ENCODE measurements at regions of chr10 and their contacts with region 1.

Region 1: GRCh38 chr10:4849555-4850242 is 23.7 kb downstream of the AKR1E2 start:
- DNase-seq: peak; percentile 91
- ATAC-seq: peak; percentile 93
- H3K4me3 Mint-ChIP-seq: no peak overlapping the region
- H3K27ac Mint-ChIP-seq: no peak overlapping the region
- H3K4me1 Mint-ChIP-seq: peaks cover 6% of the 10 kb centered on the region
- H3K27me3 Mint-ChIP-seq: no peaks in the 10 kb centered on the region

Region 2: DNA sequence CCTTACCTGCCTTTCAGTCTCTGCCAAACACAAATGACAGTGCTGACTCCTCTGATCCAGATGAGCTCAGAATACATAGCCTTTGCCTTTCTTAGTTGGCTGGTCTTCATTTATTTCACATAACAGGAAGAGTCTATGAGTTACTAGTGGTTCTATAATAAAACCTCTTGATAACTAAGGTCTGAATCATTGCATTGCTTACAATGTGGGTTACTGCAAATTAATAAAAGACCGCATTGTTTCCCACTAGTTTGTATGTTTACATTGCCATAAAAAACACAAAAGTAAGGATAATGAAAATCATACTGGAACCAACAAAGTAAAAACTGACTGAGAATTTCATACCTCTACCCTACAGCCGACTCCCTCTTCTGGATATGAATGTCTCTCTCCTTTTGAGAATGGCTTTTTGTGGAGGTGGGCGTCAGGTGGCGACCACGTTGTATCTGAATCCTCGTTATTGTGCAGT is 85.7 kb before region 1 on chr10:
- CTCF ChIA-PET with region 1: no interaction called
- POLR2A ChIA-PET with region 1: no interaction called
- DNase-seq: no peak
- ATAC-seq: no peak
- H3K4me3 Mint-ChIP-seq: no peak overlapping the region
- H3K27ac Mint-ChIP-seq: no peak overlapping the region
- H3K4me1 Mint-ChIP-seq: no peaks in the 10 kb centered on the region
- H3K27me3 Mint-ChIP-seq: peaks cover 12% of the 10 kb centered on the region

Region 3: DNA sequence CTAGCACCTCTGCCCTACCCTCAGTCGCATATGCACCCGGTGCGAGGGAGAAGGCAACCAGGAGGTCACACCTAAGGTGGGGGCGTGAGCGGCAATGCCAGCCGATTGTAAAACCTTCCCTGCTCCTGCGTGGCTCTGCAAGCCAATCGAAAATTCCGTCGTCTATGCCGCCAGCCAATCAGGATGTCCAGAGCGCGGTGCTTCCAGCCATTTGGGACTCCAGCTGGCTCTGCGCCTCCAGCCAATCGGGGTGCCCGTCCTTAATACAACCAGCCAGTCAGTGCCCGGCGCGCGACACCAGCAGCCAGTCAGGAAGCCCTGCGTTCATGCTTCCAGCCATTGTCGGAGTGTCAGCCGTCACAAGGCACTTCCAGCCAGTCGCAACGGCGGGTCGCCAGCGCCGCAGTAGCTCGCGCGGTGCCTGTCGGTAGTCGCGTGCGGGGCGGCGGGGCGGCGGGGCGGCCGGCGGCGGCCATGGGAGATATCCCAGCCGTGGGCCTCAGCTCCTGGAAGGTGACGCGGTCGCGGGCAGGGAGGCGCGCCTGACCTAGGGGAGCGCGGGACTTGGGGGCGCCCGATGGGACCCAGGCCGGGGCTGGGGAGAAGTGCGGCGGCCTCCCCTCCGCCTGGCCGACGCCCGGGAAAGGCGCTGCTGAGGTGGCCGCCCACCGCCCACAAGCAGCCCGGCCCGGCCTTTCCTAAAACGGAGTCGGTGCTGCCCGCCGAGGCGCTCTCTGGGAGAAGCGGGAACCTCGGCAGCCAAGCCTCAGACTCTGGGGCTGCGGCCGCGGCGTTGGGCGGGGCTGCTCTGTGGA is 23.6 kb before region 1 on chr10 and contains the start of gene AKR1E2:
- CTCF ChIA-PET with region 1: interaction called, 10 read pairs
- POLR2A ChIA-PET with region 1: no interaction called
- DNase-seq: peak; percentile 88
- ATAC-seq: peak; percentile 97
- H3K4me3 Mint-ChIP-seq: peak within 1 kb of the TSS; percentile 77
- H3K27ac Mint-ChIP-seq: peak within 1 kb of the TSS; percentile 67
- H3K4me1 Mint-ChIP-seq: peaks cover 17% of the 10 kb centered on the region
- H3K27me3 Mint-ChIP-seq: peaks cover 39% of the 10 kb centered on the region
- total RNA-seq, gene AKR1E2: 6.5 to 8.9 TPM

Region 4: DNA sequence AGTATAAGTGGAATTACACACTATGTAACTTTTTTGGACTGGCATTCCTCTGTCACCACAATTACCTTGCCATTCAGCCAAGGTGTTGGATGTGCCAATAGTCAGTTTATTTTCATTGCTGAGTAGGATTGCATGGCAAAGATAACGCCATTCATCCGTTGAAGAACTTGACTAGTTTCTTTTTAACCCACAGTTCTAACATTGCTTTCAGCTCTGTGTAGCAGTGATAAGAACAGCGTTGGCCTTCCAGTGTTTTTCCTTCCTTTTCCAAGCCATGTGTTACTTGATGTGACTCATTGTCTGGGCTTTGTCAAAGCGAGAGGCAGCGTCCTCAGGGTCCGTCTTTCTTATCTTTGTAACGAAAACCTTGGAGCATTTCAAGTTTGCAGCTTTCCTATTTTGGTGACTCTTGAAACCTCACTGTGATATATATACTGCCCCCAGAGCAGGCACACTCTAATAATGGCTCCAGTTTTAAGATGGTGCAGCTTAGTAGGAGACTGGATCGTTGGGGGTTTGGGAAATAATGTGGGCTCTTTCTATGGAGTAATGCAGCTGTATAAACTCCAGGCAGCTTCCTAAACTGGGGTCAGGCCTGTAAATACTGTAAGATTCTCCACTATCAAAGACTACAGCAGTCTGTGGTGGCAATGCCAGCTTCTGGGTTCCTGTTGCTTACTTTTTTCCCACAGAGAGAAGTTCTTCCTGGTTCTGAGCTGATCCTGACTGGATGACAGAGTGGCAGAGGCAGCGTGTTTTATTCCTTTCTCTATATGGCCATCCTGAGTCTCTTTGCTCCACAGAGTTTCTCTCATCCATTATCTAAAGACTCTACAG is 18.0 kb after region 1 on chr10:
- CTCF ChIA-PET with region 1: interaction called, 21 read pairs
- POLR2A ChIA-PET with region 1: no interaction called
- DNase-seq: no peak
- ATAC-seq: no peak
- H3K4me3 Mint-ChIP-seq: no peak overlapping the region
- H3K27ac Mint-ChIP-seq: no peak overlapping the region
- H3K4me1 Mint-ChIP-seq: no peaks in the 10 kb centered on the region
- H3K27me3 Mint-ChIP-seq: peaks cover 7% of the 10 kb centered on the region

Region 5: DNA sequence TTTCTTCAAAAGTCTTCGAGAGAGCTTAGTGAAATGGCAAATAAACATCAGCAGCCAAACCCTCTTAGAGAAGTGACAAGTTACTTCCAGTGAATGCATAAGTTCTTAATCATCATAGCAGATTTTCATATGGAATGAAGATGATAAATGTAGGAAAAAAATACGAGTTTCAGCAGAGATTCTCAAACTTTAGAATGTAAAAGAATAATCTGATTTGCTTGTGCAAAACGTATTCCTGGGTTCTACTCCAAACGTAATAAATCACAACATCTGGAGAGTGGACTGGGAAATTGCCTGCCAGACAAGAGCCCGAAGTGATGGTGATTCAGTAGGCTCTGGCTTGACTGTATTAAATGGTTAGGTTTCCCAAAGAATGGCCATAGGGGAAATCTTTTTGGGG is 38.5 kb after region 1 on chr10:
- CTCF ChIA-PET with region 1: no interaction called
- POLR2A ChIA-PET with region 1: no interaction called
- DNase-seq: no peak
- ATAC-seq: no peak
- H3K4me3 Mint-ChIP-seq: no peak overlapping the region
- H3K27ac Mint-ChIP-seq: no peak overlapping the region
- H3K4me1 Mint-ChIP-seq: no peaks in the 10 kb centered on the region
- H3K27me3 Mint-ChIP-seq: no peaks in the 10 kb centered on the region

Region 6: GRCh38 chr10:5283305-5284158 is 433.8 kb after region 1 on chr10:
- CTCF ChIA-PET with region 1: interaction called, 33 read pairs
- POLR2A ChIA-PET with region 1: no interaction called
- DNase-seq: peak; percentile 78
- ATAC-seq: peak; percentile 86
- H3K4me3 Mint-ChIP-seq: no peak overlapping the region
- H3K27ac Mint-ChIP-seq: peak overlapping the region; percentile 85
- H3K4me1 Mint-ChIP-seq: peaks cover 27% of the 10 kb centered on the region
- H3K27me3 Mint-ChIP-seq: peaks cover 4% of the 10 kb centered on the region

Region 7: DNA sequence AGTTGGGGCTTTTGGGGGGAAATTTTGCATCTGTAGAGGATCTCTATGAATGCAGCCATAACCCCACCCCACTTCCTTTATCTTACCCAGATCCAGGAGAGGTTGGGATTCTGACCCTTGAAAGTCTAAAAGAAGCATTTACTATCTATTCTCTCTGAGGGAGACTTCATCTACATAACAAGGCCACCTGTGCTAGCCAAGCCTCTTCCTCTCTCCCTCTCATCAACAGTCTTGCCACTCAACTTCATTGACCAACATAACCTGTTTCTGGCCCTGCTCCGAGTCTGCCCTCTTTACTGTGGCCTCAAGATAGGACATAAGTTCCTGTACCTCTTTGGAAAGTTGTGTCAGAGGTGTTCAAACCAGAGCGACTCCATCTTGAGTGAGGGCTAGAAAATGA is 535.5 kb after region 1 on chr10:
- CTCF ChIA-PET with region 1: interaction called, 17 read pairs
- POLR2A ChIA-PET with region 1: interaction called, 4 read pairs
- DNase-seq: no peak
- ATAC-seq: no peak
- H3K4me3 Mint-ChIP-seq: no peak overlapping the region
- H3K27ac Mint-ChIP-seq: no peak overlapping the region
- H3K4me1 Mint-ChIP-seq: no peaks in the 10 kb centered on the region
- H3K27me3 Mint-ChIP-seq: peaks cover 3% of the 10 kb centered on the region

Region 8: GRCh38 chr10:5434017-5434753 is 584.5 kb after region 1 on chr10:
- CTCF ChIA-PET with region 1: interaction called, 82 read pairs
- POLR2A ChIA-PET with region 1: no interaction called
- DNase-seq: no peak
- ATAC-seq: peak; percentile 78
- H3K4me3 Mint-ChIP-seq: peak overlapping the region; percentile 8
- H3K27ac Mint-ChIP-seq: peak overlapping the region; percentile 57
- H3K4me1 Mint-ChIP-seq: peaks cover 13% of the 10 kb centered on the region
- H3K27me3 Mint-ChIP-seq: no peaks in the 10 kb centered on the region

Region 9: GRCh38 chr10:5623081-5623748 is 773.5 kb after region 1 on chr10:
- CTCF ChIA-PET with region 1: interaction called, 29 read pairs
- POLR2A ChIA-PET with region 1: no interaction called
- DNase-seq: peak; percentile 87
- ATAC-seq: peak; percentile 96
- H3K4me3 Mint-ChIP-seq: no peak overlapping the region
- H3K27ac Mint-ChIP-seq: no peak overlapping the region
- H3K4me1 Mint-ChIP-seq: peaks cover 5% of the 10 kb centered on the region
- H3K27me3 Mint-ChIP-seq: no peaks in the 10 kb centered on the region